G401 (cell line): ENCODE measurements at regions of chr2 and their contacts with region 1.

Region 1: DNA sequence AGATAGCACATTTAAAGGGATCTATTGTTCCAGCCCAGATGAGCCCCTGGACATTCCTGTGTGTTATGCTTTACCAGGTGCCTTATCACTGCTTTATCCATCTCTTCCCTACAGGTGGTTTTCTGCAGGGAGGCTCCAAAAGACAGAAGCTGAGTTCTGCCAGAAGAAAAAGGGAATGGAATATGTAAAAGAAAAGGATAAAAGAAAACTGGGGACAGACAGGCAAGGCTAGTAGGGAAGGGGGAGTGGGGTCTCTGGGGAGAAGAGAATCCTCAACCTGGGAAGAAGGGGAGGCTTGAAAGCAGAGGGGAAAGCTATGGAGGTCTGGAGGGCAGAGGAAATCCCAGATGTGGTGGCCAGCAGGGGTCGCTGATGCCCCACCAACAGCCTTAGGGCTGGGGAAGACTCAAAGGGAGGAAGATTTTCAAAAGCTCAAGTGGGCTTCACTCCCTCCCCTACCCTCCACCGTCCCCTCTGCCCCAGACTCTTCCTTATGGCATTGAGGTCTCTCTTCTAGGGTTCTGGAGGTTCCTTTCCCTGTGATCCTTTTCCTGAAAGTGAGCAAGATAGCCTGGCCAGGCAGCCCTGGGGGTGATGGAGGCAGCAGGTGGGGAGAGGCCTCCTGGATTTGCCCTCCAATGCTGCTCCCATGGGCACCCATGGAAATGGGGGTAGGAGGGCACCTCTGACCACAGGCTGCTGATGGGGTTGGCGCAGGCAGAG is 178.1 kb upstream of the PKDCC start:
- DNase-seq: peak; percentile 45

Region 2: DNA sequence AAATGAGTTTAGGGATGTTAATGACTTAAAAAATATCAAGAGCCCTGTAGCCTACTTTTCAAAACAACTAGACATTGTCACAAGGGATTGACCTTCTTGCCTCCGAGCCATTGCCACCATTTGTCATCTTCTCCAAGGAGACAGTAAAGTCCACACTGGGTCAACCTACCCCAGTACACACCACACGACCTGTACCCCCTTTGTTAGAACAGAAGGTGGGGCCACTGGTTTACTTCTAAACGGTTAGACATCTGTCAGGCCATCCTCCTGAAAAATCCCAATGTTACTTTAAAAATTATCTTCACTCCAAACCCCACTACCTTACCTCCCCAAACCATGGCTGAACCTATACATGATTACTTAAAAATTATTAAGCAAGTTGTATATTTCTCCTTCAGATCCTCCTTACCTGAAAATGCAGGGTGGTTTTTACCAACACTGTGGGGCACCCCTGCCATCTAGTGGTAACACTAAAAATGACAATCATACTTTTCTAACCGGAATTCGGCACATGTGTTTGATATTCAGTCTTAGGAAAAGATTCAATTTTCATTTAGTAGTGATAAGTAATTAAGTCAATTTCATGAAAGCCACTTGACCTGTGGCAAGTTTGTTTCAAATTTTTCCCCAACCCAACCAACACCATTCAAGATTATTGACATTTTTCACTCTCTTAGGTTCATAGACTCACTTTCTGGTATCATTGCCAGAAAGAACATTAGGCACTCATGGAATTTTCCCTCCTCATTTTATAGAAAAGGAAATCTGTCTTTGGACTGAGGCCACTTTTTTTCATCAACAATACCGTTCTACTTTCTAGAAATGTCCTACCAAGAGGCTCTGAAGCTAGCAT is 87.2 kb before region 1 on chr2:
- in situ Hi-C with region 1: no loop called
- DNase-seq: peak; percentile 53

Region 3: DNA sequence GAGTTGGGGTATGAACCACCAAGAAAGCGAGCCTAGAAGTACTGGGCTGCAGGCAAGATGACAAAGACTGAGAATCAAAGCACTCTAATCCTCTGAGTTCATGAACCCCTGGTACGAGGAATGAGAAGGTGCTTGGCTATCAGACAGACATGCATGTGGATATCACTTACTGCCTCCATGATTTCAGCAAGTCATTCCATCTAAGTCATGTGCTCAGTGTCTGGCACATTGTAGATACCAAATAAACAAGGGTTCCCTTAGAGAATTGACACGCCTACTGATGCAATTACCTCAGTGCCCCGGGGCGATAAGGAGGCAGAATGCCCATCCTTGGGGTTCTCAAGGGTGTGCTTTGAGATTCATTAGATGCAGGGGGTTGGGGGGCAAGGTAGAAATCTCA is 52.5 kb after region 1 on chr2:
- in situ Hi-C with region 1: no loop called
- DNase-seq: no peak

Region 4: DNA sequence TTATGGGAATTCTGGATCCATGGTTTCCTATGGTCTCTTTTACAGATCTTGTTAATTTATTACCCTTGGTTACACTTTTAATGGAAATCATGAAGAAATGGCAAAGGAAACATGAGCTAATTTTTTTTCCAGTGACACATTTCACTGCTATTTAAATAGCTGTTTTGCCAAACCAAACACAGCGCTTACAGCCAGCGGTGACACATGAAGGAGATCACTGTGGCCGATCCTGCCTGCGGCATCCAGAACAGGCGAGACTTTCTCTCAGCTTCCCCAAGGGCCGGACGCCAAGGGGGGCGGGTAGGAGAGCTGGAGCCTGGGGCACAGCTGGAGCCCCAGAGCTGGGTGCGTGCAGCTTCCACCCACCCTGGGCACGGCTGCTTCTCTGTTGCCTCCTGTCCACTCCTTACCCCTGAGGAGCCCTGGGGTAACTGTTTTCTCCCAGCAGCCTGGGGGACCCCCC is 96.8 kb after region 1 on chr2:
- in situ Hi-C with region 1: no loop called
- DNase-seq: no peak

Region 5: GRCh38 chr2:42086500-42086953 is 216.8 kb after region 1 on chr2:
- in situ Hi-C with region 1: loop called (anchors 25 kb)
- DNase-seq: peak; percentile 68

Region 6: DNA sequence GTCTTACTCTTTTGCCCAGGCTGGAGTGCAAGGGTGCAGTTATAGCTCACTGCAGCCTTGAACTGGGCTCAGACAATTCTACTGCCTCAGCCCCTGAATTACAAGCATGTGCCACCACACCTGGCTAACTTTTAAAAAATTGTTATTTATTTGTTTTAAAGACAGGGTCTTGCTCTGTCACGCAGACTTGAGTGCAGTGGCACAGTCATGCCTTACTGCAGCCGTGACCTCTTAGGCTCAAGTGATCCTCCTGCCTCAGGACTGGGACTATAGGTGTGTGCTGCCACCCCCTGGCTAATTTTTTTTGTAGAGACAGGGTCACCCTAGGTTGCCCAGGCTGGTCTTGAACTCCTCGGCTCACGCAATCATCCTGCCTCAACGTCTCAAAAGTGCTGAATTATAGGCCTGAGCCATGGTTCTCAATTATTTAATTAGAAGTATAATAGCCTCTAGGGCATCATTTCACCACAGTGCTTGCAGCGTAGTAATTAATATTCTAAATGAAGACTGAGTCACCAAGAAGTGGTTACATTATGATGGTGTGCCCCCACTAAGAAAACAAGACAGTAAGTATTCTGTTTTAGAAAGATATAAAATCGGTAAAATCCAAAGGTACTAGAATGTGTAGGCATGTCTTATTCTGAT is 369.1 kb after region 1 on chr2:
- in situ Hi-C with region 1: loop called (anchors 25 kb)
- DNase-seq: peak; percentile 46